ENCODE measurements at regions of chr1 and their contacts with region 1.

Region 1: DNA sequence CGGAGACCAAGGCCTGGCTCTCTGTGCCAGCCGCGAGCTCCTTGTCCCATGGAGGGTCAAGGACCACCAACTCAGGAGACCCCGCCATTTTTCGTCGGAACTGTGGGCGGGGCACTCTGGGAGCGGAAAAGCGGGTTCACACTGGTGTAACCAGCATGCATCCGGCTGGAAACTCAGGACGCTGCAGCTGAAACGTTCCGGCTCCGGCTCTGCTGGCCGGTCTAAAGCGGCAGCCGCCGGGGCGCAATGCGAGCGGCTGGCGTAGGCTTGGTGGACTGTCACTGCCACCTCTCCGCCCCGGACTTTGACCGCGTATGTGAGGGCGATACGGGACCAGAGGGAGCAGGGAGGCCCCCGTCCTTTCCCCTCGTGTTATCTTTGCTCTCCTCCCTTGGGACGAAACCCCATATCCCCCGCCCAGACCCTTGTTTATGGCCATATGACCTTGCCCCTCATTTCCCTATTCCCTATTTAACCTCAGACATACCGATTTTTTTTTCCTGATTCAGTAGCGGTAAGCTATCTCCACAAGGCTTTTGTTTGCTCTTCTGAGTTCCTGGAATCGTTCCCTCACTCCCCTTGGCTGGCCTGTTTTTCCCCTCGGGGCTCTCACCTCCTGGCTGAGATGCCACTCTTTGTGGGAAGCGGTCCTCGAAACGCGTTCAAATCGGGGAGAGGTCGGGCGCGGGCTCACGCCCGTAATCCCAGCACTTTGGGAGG is at the starts of genes NSL1 and TATDN3:
- DNase-seq: peak; percentile 93
- H3K4me3 Mint-ChIP-seq: peak within 1 kb of the TSS; percentile 99
- H3K27ac Mint-ChIP-seq: peak within 1 kb of the TSS; percentile 98
- H3K4me1 Mint-ChIP-seq: peaks cover 30% of the 10 kb centered on the region
- H3K27me3 Mint-ChIP-seq: no peaks in the 10 kb centered on the region
- total RNA-seq, gene NSL1: 40.2 and 44.7 TPM in 2 replicates
- total RNA-seq, gene TATDN3: 14.4 and 18.5 TPM in 2 replicates

Region 2: GRCh38 chr1:211830330-211831142 is 961.3 kb before region 1 on chr1 and contains the start of gene LPGAT1:
- intact Hi-C with region 1: loop called (anchors 5 kb)
- DNase-seq: peak; percentile 65
- H3K4me3 Mint-ChIP-seq: peak within 1 kb of the TSS; percentile 91
- H3K27ac Mint-ChIP-seq: peak within 1 kb of the TSS; percentile 90
- H3K4me1 Mint-ChIP-seq: peaks cover 69% of the 10 kb centered on the region
- H3K27me3 Mint-ChIP-seq: peaks cover 2% of the 10 kb centered on the region
- total RNA-seq, gene LPGAT1: 35.3 and 35.6 TPM in 2 replicates

Region 3: GRCh38 chr1:212769459-212770167 is 22.2 kb before region 1 on chr1:
- intact Hi-C with region 1: loop called (anchors 1 kb)
- DNase-seq: no peak
- H3K4me3 Mint-ChIP-seq: no peak overlapping the region
- H3K27ac Mint-ChIP-seq: peak overlapping the region; percentile 85
- H3K4me1 Mint-ChIP-seq: peaks cover 43% of the 10 kb centered on the region
- H3K27me3 Mint-ChIP-seq: peaks cover 3% of the 10 kb centered on the region

Region 4: DNA sequence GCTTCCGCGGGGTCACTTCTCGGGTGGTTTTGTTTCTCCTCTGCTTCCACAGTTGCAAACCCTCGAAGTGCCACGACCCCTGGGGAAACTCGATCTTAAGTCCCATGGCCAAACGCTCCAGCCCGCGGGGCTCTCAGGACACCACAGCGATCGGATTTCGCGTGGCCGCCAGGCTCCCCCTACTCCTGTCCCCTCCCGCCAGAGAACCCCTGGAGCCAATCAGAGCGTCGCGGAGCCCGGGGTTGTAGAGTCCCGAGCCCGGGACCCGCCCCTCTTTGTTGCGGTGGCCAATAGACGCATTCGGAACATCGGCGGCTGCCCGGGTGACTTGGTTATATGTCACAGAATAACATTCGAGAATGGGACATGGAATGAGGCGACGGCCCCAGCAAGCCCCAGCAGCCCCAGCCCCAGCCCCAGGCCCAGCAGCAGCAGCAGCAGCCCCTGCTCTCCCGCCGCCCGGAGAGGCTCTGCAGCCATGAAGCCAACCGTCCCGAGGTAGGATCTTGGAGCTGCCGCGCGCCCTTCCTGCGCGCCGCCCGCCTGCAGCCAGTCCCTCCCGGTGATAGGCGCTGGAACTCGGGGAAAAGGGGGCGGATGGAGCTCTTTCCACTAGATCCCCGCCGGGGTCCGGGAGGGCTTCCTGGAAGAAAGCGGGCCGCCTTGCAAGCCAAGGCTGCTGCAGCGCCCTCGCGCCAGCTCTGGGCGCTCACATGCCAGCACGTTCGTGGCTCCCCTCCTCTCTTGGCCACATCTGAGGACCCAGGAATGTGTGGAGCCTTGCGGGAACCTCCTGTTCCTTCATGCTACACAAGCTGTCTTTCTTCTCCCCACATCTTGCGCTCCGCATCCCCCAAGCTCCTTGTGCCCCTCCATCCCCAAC is 158.6 kb after region 1 on chr1 and contains the start of gene VASH2:
- intact Hi-C with region 1: loop called (anchors 1 kb)
- DNase-seq: peak; percentile 61
- H3K4me3 Mint-ChIP-seq: peak within 1 kb of the TSS; percentile 82
- H3K27ac Mint-ChIP-seq: no peak within 1 kb of the TSS
- H3K4me1 Mint-ChIP-seq: peaks cover 6% of the 10 kb centered on the region
- H3K27me3 Mint-ChIP-seq: peaks cover 52% of the 10 kb centered on the region
- total RNA-seq, gene VASH2: 0.10 and 0.39 TPM in 2 replicates

Region 5: GRCh38 chr1:213051127-213051880 is 259.5 kb after region 1 on chr1 and contains the start of gene RPS6KC1:
- intact Hi-C with region 1: loop called (anchors 1 kb)
- DNase-seq: peak; percentile 74
- H3K4me3 Mint-ChIP-seq: peak within 1 kb of the TSS; percentile 96
- H3K27ac Mint-ChIP-seq: peak within 1 kb of the TSS; percentile 90
- H3K4me1 Mint-ChIP-seq: peaks cover 37% of the 10 kb centered on the region
- H3K27me3 Mint-ChIP-seq: peaks cover 9% of the 10 kb centered on the region
- total RNA-seq, gene RPS6KC1: 7.2 and 7.5 TPM in 2 replicates